Heart right ventricle (tissue), 16 donors: ENCODE measurements at regions of chr20 and their contacts with region 1.

Region 1: DNA sequence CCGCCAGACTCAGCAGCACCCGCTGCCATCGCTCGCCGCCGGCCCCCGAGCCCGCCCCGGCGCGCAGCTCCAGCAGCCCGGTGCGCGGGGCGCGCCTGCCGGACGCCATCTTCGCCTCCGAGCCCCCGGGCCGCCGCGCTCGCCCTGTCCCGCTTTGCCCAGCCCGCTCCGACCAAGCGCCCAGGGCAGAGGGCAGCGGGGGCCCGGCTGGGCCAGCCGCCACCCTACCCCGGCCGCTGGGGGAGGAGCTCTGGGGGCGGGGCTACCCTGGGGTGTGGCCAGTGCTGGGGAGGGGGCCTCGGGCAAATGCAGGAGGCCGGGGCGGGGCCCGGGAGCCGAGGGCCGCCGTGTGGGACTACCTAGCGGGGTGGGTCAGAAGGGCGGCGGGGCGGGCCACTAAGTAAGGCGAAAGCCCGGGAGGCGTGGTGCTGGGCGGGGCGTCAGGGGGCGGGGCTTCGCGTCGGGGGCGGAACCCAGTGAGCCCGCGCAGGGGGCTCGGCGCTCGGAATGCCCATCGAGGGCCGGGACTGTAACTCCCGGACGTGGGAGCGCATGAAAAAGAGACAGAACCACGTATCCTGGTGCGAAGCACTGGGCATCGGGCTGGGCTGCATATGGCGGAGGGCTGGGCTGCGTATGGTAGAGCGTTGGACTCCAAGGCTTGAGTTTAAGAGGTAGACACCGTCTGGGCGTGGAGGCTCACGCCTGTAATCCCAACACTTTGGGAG is at the start of gene SNTA1:
- DNase-seq: peak; percentile 93 to 96
- ATAC-seq: peak; percentile 89 to 93 (median 92)
- H3K4me3 ChIP-seq: peak within 1 kb of the TSS; percentile 37 to 81 (median 70)
- H3K27ac ChIP-seq: peak within 1 kb of the TSS; percentile 78 to 93 (median 88)
- H3K4me1 ChIP-seq: peaks cover 0 to 52% (median 14%) of the 10 kb centered on the region in 9 donors
- H3K27me3 ChIP-seq: peaks cover 0 to 5% (median 0%) of the 10 kb centered on the region in 7 donors
- CTCF ChIP-seq: no peak
- total RNA-seq, gene SNTA1: 137 to 219 (median 150) TPM

Region 2: DNA sequence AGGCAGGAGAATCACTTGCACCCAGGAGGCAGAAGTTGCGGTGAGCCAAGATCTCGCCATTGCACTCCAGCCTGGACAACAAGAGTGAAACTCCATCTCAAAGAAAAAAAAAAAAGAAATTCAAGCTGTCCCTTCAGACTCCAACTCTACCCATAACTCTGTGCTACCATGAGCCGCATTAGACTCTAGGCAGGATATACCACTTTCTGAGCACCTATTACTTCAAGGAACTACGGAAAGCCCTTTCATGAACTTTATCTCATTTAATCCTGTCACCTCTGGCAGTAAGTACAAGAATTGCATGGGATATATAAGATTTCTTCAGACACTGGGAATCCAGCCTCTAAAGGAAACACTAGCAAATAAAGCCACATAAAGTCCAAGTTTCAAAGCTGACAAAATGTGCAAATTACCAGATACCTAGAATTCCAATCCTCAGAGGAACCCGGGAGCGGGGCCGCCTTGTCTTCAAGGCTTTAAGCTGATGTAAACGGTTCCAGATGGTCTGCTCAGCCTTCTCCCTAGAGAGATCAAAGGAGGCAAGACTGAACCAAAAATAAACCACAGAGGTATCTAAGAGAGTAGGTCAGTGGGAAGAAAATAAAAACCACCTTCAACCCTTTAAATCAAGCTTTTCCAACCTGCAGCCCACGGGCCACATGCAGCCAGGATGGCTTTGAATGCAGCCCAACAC is 51.8 kb before region 1 on chr20:
- intact Hi-C with region 1: loop called in 1 of 10 experiments (anchors 2 kb)
- DNase-seq: no peak
- ATAC-seq: peak in 1 of 8 donors; percentile 25
- H3K4me3 ChIP-seq: no peak overlapping the region
- H3K27ac ChIP-seq: no peak overlapping the region
- H3K4me1 ChIP-seq: peaks cover 0 to 7% (median 0%) of the 10 kb centered on the region in 9 donors
- H3K27me3 ChIP-seq: no peaks in the 10 kb centered on the region
- CTCF ChIP-seq: no peak

Region 3: GRCh38 chr20:33401184-33401920 is 42.3 kb before region 1 on chr20 and contains the start of gene CDK5RAP1:
- intact Hi-C with region 1: loop called in 1 of 10 experiments (anchors 5 kb)
- DNase-seq: peak; percentile 80 to 88
- ATAC-seq: peak; percentile 91 to 98 (median 96)
- H3K4me3 ChIP-seq: peak within 1 kb of the TSS; percentile 72 to 99 (median 92)
- H3K27ac ChIP-seq: peak within 1 kb of the TSS in 9 of 10 donors; percentile 50 to 85 (median 75)
- H3K4me1 ChIP-seq: peaks cover 13 to 31% (median 24%) of the 10 kb centered on the region in 9 donors
- H3K27me3 ChIP-seq: no peaks in the 10 kb centered on the region
- CTCF ChIP-seq: no peak
- total RNA-seq, gene CDK5RAP1: 16.9 to 27.4 (median 21.7) TPM

Region 4: GRCh38 chr20:33415948-33416347 is 27.7 kb before region 1 on chr20:
- intact Hi-C with region 1: loop called in 3 of 10 experiments (anchors 1 to 2 kb)
- DNase-seq: peak in 1 of 2 donors; percentile 58
- ATAC-seq: peak in 7 of 8 donors; percentile 18 to 54 (median 40)
- H3K4me3 ChIP-seq: no peak overlapping the region
- H3K27ac ChIP-seq: peak overlapping the region in 4 of 10 donors; percentile 24 to 53 (median 34)
- H3K4me1 ChIP-seq: peaks cover 11 to 57% (median 35%) of the 10 kb centered on the region in 9 donors
- H3K27me3 ChIP-seq: no peaks in the 10 kb centered on the region
- CTCF ChIP-seq: peak; percentile 20 to 65 (median 48)

Region 5: DNA sequence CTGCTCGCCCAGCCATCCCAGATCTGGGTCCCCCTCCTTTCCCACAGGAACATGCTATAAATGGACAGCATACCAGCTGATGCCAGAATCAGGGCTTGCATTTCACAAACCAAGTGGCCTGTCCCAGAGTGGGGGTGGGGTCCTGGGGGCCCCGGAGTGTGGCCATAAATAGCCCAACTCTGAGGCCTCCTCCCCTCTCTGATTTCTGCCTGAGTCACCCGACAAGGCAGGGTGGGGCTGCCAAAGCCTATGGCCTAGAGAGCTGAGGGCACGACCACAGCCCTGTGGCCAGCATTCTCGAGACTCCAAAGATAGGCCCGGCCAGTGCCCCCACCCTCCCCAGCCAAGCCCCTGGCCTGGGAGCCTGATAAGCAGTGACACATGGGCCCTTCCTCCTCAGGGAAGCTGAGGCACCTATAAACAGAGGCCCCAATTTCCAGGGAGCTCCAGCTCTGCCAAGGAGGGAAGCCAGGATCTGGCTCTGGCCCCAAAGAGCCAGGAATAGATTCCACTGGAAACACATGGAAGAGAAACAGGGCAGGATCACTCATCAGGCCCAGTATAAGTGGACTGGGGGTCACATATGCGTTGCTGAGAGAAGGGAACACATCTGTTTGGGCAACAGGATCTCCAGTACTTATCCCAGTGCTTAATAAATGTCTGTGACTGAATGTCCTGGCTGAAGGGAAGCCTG is 20.4 kb before region 1 on chr20:
- intact Hi-C with region 1: loop called in 2 of 10 experiments (anchors 1 to 2 kb)
- DNase-seq: peak; percentile 77 to 87
- ATAC-seq: peak; percentile 81 to 91 (median 86)
- H3K4me3 ChIP-seq: no peak overlapping the region
- H3K27ac ChIP-seq: peak overlapping the region; percentile 81 to 94 (median 90)
- H3K4me1 ChIP-seq: peaks cover 18 to 97% (median 58%) of the 10 kb centered on the region in 9 donors
- H3K27me3 ChIP-seq: no peaks in the 10 kb centered on the region
- CTCF ChIP-seq: no peak

Region 6: DNA sequence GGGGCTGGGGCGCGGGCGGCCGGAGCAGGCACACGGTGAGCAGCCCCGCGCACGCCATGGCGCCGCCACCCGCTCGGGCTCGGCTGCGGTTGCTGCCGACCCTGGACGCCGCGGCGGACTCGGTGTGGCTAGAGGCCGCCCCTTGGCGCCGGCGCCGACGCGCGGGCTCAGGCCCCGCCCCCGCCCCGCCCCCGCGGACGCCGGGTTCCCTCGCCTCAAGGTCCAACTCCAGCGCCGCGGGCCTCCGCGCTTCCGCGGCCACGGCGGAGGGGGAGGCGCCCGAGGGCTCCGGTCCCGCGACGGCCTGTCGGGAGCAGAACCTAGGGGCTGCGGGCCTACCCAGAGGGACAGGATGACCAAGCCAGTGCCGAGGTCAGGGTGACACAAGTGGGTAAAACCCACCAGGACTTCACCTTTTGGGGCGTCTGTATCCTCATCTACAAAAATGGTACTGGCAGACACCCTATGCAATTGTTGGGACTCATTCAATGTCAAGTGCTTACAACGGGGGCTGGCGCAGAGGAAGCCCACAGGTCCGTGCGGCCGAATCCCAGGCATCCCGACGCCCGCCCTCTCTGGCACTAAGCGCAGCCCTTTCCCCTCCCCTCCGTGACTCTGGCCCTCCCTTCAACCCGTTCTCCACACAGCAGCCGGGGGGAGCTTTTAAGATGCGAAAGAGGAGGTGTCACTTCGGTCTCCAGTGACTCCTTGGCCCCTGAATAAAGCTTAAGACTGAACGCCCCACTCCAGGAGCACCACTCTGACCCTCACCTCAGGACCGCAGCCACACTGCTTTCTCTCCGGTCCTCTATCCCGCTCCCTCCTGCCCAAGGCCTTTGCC is 230.8 kb after region 1 on chr20 and contains the start of gene NECAB3:
- intact Hi-C with region 1: no loop called
- DNase-seq: peak; percentile 83 to 86
- ATAC-seq: peak; percentile 73 to 91 (median 85)
- H3K4me3 ChIP-seq: peak within 1 kb of the TSS; percentile 56 to 92 (median 71)
- H3K27ac ChIP-seq: peak within 1 kb of the TSS; percentile 73 to 94 (median 85)
- H3K4me1 ChIP-seq: peaks cover 9 to 53% (median 28%) of the 10 kb centered on the region in 9 donors
- H3K27me3 ChIP-seq: no peaks in the 10 kb centered on the region
- CTCF ChIP-seq: no peak
- total RNA-seq, gene NECAB3: 53.7 to 92.8 (median 77.2) TPM

Region 7: DNA sequence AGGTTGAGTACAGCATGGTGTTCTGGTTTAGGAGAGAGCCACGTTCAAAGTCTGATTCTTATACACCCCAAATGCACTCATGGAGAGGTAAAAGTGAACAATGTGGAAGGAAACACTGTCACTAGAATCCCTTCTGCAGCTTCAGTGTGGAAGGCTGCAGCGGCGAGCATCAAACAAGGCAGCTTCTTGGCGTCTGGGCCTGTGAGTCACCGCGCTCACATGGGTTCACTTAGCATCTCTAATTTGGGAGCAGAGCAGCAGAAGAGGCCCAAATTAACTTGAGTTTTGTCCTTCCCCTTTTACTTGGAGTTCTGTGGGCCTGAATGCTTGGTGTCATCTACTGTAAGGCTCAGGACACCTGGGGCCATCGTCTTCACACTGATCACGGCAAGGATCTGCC is 253.5 kb after region 1 on chr20:
- intact Hi-C with region 1: no loop called
- DNase-seq: peak in 1 of 2 donors; percentile 43
- ATAC-seq: peak; percentile 35 to 82 (median 77)
- H3K4me3 ChIP-seq: no peak overlapping the region
- H3K27ac ChIP-seq: peak overlapping the region in 3 of 10 donors; percentile 16 to 50 (median 47)
- H3K4me1 ChIP-seq: peaks cover 0 to 31% (median 10%) of the 10 kb centered on the region in 9 donors
- H3K27me3 ChIP-seq: no peaks in the 10 kb centered on the region
- CTCF ChIP-seq: no peak

Region 8: GRCh38 chr20:33826270-33826897 is 382.7 kb after region 1 on chr20:
- intact Hi-C with region 1: no loop called
- DNase-seq: no peak
- ATAC-seq: no peak
- H3K4me3 ChIP-seq: no peak overlapping the region
- H3K27ac ChIP-seq: peak overlapping the region in 2 of 10 donors; percentile 0 to 24
- H3K4me1 ChIP-seq: peaks cover 19 to 100% (median 89%) of the 10 kb centered on the region in 9 donors
- H3K27me3 ChIP-seq: no peaks in the 10 kb centered on the region
- CTCF ChIP-seq: no peak